HEK293 (cell line): ENCODE measurements at regions of chr11 and their contacts with region 1.

Region 1: DNA sequence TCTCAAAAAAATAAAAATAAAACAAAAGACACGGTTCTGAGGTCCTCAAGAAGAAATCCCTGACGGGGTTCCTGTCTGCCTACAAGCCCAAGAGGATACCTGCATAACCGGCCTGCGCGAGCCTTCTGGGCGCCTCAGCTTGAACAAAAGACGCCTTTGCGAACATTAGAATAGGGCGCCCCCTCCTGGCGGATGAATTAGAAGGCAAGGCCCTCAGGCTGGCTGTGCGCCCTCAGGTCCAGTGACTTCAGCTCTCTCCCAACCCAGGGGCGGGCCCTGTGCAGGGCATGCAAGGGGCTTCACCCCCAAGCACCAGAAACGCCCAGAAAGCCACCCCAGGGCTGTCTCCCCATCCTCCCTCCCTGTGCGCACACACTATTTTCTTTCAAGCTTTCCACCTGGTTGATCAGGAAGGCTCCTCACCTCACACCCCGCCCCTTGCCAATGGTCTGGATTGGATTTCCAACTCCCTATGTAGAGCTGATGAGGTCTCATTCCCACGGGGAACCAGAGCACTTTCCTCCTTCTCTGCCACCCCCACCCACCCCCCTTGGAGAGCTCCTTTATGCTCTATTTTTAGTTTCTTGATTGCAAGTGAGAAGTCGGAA is 273.3 kb downstream of the BUD13 start:
- H3K4me3 ChIP-seq: no peak overlapping the region
- H3K27ac ChIP-seq: no peak overlapping the region
- H3K4me1 ChIP-seq: no peaks in the 10 kb centered on the region
- CTCF ChIP-seq: peak; percentile 28; the same call in 1 of the 2 replicates

Region 2: DNA sequence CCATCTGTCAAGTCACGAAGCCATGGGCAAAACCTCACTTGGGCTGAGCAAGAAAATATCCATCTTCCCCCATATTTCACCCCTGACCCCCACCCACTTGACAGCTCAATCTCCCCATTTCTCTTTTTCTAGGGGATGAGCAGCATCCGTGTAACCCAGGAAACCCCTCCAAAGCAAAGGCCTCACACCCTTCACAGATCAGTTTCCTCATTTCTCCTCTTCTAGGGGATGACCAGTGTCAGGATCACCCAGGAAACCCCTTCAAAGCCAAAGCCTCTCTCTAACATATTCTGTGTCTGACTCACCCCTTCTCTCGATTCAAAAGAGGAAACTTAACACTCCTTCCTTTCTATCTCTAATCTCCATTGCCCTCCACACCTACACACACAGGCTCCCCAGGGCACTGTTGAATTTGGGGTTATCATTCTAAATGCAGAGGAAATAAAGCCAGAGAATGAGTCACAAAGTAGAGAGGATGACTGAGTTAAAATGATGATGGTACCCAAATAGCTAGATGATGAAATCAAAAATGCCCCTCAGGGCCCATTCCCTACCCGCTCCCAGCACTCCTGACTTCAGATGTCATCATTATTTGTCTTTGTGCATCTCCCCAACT is 166.4 kb before region 1 on chr11:
- CTCF ChIA-PET with region 1: no interaction called
- POLR2A ChIA-PET with region 1: no interaction called
- H3K4me3 ChIP-seq: no peak overlapping the region
- H3K27ac ChIP-seq: no peak overlapping the region
- H3K4me1 ChIP-seq: no peaks in the 10 kb centered on the region
- CTCF ChIP-seq: no peak

Region 3: GRCh38 chr11:116454020-116454645 is 45.4 kb before region 1 on chr11:
- CTCF ChIA-PET with region 1: interaction called, 14 read pairs
- POLR2A ChIA-PET with region 1: no interaction called
- H3K4me3 ChIP-seq: no peak overlapping the region
- H3K27ac ChIP-seq: no peak overlapping the region
- H3K4me1 ChIP-seq: peaks cover 1% of the 10 kb centered on the region
- CTCF ChIP-seq: no peak

Region 4: DNA sequence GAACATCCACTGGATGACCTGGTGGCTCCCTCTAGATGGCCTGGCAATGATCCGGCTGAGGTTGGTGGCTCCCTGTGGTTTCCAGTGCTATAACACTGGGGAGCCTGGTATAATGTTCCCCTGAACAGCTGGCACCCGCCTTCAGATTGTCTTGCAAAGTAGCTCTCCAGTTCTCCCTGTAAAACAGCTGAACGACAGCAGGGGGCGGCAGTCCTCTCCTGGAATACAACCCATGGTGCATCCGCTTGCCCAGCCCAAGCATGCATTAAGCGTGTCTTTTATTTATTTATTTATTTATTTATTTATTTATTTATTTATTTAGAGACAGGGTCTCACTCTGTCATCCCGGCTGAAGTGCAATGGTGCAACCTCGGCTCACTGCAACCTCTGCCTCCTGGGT is 14.4 kb after region 1 on chr11:
- CTCF ChIA-PET with region 1: interaction called, 23 read pairs
- POLR2A ChIA-PET with region 1: no interaction called
- H3K4me3 ChIP-seq: no peak overlapping the region
- H3K27ac ChIP-seq: no peak overlapping the region
- H3K4me1 ChIP-seq: no peaks in the 10 kb centered on the region
- CTCF ChIP-seq: no peak

Region 5: GRCh38 chr11:116829525-116830183 is 330.2 kb after region 1 on chr11 and contains the start of gene APOC3:
- CTCF ChIA-PET with region 1: no interaction called
- POLR2A ChIA-PET with region 1: no interaction called
- H3K4me3 ChIP-seq: no peak within 1 kb of the TSS
- H3K27ac ChIP-seq: no peak within 1 kb of the TSS
- H3K4me1 ChIP-seq: no peaks in the 10 kb centered on the region
- CTCF ChIP-seq: no peak